Endothelial cell of umbilical vein (primary cell): ENCODE measurements at regions of chr17 and their contacts with region 1.

Region 1: DNA sequence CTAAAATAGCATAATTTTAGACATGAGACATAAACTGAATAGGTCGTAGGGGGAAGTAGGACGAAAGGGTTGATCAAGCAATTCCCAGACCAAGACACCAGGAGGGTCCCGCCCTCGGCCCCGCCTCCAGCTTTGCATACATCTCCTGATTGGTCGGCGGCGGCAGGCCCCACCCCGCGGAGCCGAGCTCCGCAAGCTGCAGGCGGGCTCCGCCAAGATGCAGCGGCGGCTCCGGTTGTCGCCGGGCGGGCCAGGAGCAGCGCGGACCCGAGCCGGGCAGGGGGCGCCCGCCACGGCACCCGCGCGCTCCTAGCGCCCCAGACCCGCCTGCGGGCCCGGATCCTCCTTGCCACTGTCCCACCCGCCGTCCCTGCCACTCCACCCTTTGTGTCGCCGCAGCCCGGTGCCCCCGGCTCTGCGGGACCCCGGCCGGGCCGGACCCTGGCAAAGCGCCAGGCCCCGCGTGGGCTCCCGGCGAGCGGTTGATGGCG is at the start of gene CDR2L:
- DNase-seq: peak; percentile 95
- H3K4me3 ChIP-seq: peak within 1 kb of the TSS; percentile 47 to 89 (median 67)
- H3K27ac ChIP-seq: peak within 1 kb of the TSS; percentile 93
- H3K4me1 ChIP-seq: peaks cover 12% of the 10 kb centered on the region
- H3K27me3 ChIP-seq: no peaks in the 10 kb centered on the region
- CTCF ChIP-seq: no peak
- POLR2A ChIP-seq: peak; percentile 52
- total RNA-seq, gene CDR2L: 34.9 and 36.7 TPM in 2 replicates

Region 2: GRCh38 chr17:74951680-74952421 is 35.6 kb before region 1 on chr17:
- CTCF ChIA-PET with region 1: no interaction called
- POLR2A ChIA-PET with region 1: no interaction called
- dilution Hi-C with region 1: no loop called
- intact Hi-C with region 1: no loop called
- DNase-seq: no peak
- H3K4me3 ChIP-seq: no peak overlapping the region
- H3K27ac ChIP-seq: no peak overlapping the region
- H3K4me1 ChIP-seq: no peaks in the 10 kb centered on the region
- H3K27me3 ChIP-seq: no peaks in the 10 kb centered on the region
- CTCF ChIP-seq: no peak
- POLR2A ChIP-seq: no peak

Region 3: GRCh38 chr17:75019146-75019545 is 31.7 kb after region 1 on chr17:
- CTCF ChIA-PET with region 1: interaction called, 11 read pairs
- POLR2A ChIA-PET with region 1: interaction called, 5 read pairs
- dilution Hi-C with region 1: no loop called
- intact Hi-C with region 1: no loop called
- DNase-seq: no peak
- H3K4me3 ChIP-seq: no peak overlapping the region
- H3K27ac ChIP-seq: no peak overlapping the region
- H3K4me1 ChIP-seq: no peaks in the 10 kb centered on the region
- H3K27me3 ChIP-seq: no peaks in the 10 kb centered on the region
- CTCF ChIP-seq: no peak
- POLR2A ChIP-seq: no peak

Region 4: DNA sequence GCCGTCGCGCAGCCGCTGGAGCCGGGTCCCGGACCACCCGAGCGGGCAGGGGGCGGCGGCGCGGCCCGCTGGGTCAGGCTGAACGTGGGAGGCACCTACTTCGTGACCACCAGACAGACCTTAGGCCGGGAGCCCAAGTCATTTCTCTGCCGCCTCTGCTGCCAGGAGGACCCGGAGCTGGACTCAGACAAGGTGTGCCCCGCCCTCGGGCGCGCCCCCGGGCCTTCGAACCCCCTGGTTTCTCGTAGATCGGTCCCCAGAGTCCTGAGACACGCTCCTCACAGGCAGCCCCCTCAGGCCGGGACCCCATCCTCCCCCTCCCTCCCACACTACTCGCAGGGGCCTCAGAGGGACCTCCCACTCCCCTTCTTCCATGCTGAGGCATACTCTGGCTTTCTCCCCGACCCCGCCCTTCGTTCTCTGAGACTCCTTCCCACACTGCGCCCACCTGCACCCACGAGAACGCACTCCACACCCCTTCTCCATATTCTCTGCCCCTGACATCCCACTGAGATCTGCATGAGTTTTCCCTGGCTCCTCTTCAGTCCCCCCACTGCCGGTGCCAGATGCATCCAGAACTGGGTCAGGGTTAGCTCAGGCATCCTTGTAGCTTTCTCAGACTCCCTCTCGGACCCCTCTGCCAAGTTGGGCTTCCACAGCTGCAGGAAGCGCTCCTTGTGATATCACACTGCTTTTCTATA is 60.1 kb after region 1 on chr17:
- CTCF ChIA-PET with region 1: no interaction called
- POLR2A ChIA-PET with region 1: no interaction called
- dilution Hi-C with region 1: no loop called
- intact Hi-C with region 1: no loop called
- DNase-seq: peak; percentile 19
- H3K4me3 ChIP-seq: peak overlapping the region; percentile 35 to 93 (median 51)
- H3K27ac ChIP-seq: no peak overlapping the region
- H3K4me1 ChIP-seq: peaks cover 13% of the 10 kb centered on the region
- H3K27me3 ChIP-seq: no peaks in the 10 kb centered on the region
- CTCF ChIP-seq: no peak
- POLR2A ChIP-seq: no peak